ENCODE measurements at regions of chr10 and their contacts with region 1.

Region 1: DNA sequence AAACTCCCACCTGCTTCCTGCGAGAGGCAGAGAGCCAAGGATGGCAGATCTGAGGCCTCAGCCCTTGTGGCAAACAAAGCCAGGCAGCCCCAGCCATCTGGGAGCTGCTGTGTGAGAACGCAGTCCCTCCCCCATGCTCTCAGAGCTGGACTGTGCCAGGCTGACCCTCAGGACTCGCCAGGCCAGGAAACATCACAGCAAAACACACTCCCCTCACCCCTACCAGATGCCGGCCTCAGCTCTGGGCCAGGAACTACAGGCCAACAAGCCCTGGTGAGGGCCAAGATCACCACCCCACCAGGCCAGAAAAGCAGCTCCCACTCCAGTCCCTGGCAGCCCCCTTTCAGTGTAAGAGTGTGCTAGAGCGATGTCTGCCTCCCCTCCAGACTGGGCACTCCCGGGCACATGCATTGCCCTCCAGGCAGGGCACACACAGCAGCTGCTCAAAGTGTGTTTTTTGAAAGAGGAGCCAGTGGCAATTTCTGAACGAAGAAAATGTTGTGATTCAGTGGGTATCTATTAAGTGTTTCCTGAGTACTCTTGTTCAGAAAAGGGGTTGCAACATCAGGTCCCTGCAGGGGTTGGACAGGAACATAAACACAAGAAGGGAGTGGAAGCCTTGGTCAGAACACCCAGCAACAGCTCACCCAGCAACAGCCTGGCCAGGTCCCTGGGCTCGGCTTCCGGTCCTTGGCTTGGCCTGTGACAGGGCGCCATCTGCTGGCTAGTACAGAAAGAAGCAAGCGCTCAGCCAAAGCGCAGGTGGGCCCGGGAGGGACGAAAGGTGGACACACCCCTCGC is 18.3 kb downstream of the LRRC20 start:
- DNase-seq: peak; percentile 80 to 88
- ATAC-seq: peak; percentile 99
- H3K4me3 ChIP-seq: no peak overlapping the region
- H3K27ac ChIP-seq: peak overlapping the region; percentile 66 to 86
- H3K4me1 ChIP-seq: peaks cover 19% of the 10 kb centered on the region
- CTCF ChIP-seq: peak; percentile 88
- EP300 ChIP-seq: no peak
- POLR2A ChIP-seq: no peak
- RAD21 ChIP-seq: peak; percentile 97

Region 2: DNA sequence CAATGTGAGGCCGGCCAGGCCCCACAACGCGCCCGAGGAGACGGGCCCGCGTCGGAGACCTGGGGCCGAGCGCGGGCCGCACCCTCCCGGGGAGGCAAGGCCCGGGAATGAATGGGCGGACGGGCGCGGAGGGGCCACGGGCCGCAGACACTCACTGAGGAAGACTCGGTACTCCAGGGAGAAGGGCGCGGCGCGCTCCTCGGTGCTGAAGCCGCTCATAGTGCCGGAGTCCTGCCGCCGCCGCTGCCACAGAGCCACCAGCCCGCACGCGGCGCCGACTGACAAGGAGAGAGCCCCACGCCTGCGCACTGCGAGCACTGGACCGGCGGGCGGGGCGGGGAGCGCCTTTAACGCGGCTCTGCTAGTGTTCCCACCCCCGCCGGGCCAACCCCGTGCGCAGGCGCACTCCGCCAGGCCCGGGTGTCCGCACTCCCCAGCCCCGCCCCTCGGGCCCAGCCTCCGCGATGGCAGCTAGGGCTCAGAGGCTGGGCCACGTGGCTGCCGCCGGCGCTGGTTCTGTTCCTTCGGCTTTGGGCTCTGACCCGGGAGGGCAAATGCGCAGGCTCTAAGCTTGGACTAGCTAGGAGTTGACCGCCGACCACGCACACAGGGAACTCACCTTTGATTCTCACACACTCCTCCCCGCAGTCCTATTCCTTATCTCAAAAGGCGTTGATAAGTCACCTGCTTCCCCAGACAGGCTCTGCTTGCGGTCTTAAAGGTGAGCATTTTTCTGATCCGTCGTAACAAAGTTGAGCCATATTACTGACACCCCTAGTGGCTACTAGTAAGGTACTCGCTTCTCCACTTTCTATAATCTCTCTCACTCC is 130.8 kb before region 1 on chr10 and contains the start of gene PPA1:
- CTCF ChIA-PET with region 1: interaction called, 554 read pairs
- POLR2A ChIA-PET with region 1: interaction called, 12 read pairs
- DNase-seq: peak; percentile 96 to 97
- ATAC-seq: peak; percentile 94 to 97
- H3K4me3 ChIP-seq: peak within 1 kb of the TSS; percentile 91
- H3K27ac ChIP-seq: peak within 1 kb of the TSS; percentile 89 to 90
- H3K4me1 ChIP-seq: peaks cover 26% of the 10 kb centered on the region
- CTCF ChIP-seq: peak; percentile 38
- EP300 ChIP-seq: no peak
- POLR2A ChIP-seq: peak; percentile 80
- RAD21 ChIP-seq: no peak
- polyA plus RNA-seq, gene PPA1: 219 and 273 TPM in 2 replicates

Region 3: GRCh38 chr10:70272925-70273316 is 91.2 kb before region 1 on chr10:
- CTCF ChIA-PET with region 1: interaction called, 33 read pairs
- POLR2A ChIA-PET with region 1: no interaction called
- DNase-seq: peak; percentile 37 to 43
- ATAC-seq: peak; percentile 69 to 80; a peak in 4 of 6 replicates
- H3K4me3 ChIP-seq: no peak overlapping the region
- H3K27ac ChIP-seq: no peak overlapping the region
- H3K4me1 ChIP-seq: peaks cover under 1% of the 10 kb centered on the region; the same call in 2 of the 3 replicates
- CTCF ChIP-seq: peak; percentile 46; the same call in 2 of the 3 replicates
- EP300 ChIP-seq: no peak
- POLR2A ChIP-seq: no peak
- RAD21 ChIP-seq: no peak; a peak in 1 of 5 replicates

Region 4: DNA sequence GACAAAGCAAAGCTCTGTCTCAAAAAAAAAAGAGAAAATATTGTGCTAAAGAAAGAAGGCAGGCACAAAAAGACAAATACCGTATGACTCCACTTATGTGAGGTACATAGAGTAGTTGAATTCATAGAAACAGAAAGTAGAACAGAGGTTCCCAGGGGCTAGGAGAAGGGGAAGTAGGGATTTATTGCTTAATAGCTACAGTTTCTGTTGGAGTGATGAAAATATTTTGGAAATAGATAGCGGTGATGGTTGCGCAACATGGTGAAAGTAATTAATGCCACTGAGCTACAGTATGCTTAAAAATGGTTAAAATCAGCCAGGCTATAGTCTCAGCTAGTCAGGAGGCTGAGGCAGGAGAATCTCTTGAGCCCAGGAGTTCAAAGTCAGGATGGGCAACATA is 61.9 kb before region 1 on chr10:
- CTCF ChIA-PET with region 1: interaction called, 14 read pairs
- POLR2A ChIA-PET with region 1: no interaction called
- DNase-seq: no peak
- ATAC-seq: no peak
- H3K4me3 ChIP-seq: no peak overlapping the region
- H3K27ac ChIP-seq: no peak overlapping the region
- H3K4me1 ChIP-seq: no peaks in the 10 kb centered on the region
- CTCF ChIP-seq: no peak
- EP300 ChIP-seq: no peak
- POLR2A ChIP-seq: no peak
- RAD21 ChIP-seq: no peak

Region 5: DNA sequence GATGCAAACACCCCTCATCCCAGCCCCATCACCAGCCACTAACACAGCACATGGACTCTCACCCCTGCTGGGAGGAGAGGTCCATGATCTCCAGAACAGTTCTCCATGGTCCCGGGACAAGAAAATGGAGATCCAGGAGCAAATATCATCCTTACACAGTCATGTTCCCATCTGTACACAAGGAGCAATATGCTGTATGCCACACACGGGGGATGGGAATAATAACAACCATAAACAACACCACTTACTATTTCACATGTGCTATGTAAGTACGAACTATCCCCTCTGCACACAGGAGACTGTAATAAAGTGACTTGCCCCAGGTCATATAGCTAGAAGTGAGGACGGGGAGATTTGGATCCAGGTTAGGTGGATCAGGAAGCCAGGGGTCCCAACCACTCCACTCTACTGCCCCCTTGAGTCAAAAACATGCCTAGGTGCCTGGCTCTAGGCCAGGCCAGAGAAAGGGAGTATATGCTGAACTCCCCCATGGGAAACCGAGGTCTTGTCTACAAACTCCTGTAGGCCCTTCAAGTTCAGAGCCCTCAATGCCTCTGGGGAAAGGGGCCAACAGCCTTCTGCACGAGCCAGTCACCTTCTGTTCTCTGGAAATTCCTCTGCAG is 15.8 kb before region 1 on chr10:
- CTCF ChIA-PET with region 1: interaction called, 69 read pairs
- POLR2A ChIA-PET with region 1: no interaction called
- DNase-seq: peak; percentile 17 to 25
- ATAC-seq: peak; percentile 34 to 80; a peak in 4 of 6 replicates
- H3K4me3 ChIP-seq: no peak overlapping the region
- H3K27ac ChIP-seq: no peak overlapping the region
- H3K4me1 ChIP-seq: peaks cover 25% of the 10 kb centered on the region
- CTCF ChIP-seq: peak; percentile 37; the same call in 2 of the 3 replicates
- EP300 ChIP-seq: no peak
- POLR2A ChIP-seq: no peak
- RAD21 ChIP-seq: peak; percentile 25 to 55; a peak in 2 of 5 replicates

Region 6: DNA sequence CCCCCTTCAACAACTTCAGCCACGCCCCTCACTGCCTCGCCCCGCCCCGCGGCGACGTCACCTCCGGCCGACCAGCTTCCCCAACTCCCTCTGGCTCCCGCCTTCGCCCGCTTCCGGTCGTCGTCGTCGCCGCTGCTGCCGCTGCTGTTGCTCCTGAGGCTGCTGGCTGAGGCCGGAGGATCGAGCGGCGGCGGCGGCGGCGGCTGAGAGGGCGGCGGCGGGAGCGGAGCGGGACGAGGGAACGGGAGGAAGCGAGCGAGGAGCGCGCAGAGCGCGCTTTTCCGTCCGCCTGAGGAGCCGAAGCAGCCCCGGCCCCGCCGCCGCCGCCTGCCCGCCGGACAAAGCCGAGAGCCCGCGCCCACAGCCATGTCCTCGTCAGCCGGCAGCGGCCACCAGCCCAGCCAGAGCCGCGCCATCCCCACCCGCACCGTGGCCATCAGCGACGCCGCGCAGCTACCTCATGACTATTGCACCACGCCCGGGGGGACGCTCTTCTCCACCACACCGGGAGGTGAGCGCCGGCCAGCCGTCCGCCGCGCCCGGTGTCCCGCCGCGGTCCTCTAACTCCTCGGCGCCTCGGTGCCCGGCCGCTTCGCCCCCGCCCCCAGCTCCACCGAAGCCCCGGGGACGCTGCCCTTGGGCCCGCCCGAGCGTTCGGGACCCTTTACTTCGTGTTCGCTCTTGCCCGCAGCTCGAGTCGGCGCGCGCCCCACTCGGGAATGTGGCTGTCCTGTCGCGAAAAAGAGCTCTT is 40.0 kb after region 1 on chr10 and contains the start of gene EIF4EBP2:
- CTCF ChIA-PET with region 1: interaction called, 10 read pairs
- POLR2A ChIA-PET with region 1: interaction called, 5 read pairs
- DNase-seq: peak; percentile 71 to 96
- ATAC-seq: peak; percentile 63 to 87
- H3K4me3 ChIP-seq: peak within 1 kb of the TSS; percentile 58
- H3K27ac ChIP-seq: peak within 1 kb of the TSS; percentile 75 to 92
- H3K4me1 ChIP-seq: peaks cover 15% of the 10 kb centered on the region
- CTCF ChIP-seq: no peak
- EP300 ChIP-seq: no peak
- POLR2A ChIP-seq: peak; percentile 89
- RAD21 ChIP-seq: no peak
- polyA plus RNA-seq, gene EIF4EBP2: 15.4 and 17.7 TPM in 2 replicates

Region 7: GRCh38 chr10:70500812-70501301 is 136.7 kb after region 1 on chr10:
- CTCF ChIA-PET with region 1: no interaction called
- POLR2A ChIA-PET with region 1: no interaction called
- DNase-seq: no peak
- ATAC-seq: no peak
- H3K4me3 ChIP-seq: no peak overlapping the region
- H3K27ac ChIP-seq: no peak overlapping the region
- H3K4me1 ChIP-seq: no peaks in the 10 kb centered on the region
- CTCF ChIP-seq: no peak
- EP300 ChIP-seq: no peak
- POLR2A ChIP-seq: no peak
- RAD21 ChIP-seq: no peak